Activated B cell treated with CpG ODN at 0.5 μM for 24 hours (primary cell): ENCODE measurements at regions of chr15 and their contacts with region 1.

Region 1: DNA sequence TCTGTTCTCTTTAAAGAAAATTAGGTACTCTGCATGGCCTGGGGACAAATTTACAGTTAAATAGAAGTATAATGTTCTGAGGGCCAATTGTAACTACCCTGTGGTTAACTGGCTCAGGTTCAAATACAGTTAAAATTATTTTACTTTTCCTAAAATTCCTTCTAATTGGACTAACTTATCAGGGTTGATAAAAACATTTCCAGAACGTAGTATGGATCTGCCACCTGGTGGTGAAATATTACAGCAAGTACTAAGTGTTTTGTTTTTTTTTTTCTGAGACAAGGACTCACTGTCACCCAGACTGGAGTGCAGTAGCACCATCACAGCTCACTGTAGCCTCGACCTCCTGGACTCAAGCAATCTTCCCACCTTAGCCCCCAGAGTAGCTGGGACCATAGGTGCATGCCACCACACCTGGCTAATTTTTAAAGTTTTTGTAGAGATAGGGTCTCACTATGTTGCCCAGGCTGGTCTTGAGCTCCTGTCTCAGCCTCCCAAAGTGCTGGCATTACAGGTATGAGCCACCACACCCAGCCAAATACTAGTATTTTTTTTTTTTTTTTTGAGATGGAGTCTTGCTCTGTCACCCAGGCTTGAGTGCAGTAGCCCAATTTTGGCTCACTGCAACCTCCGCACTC is 29.2 kb downstream of the NEO1 start:
- DNase-seq: no peak
- ATAC-seq: no peak
- H3K4me3 Mint-ChIP-seq: no peak overlapping the region
- H3K27ac Mint-ChIP-seq: no peak overlapping the region
- H3K4me1 Mint-ChIP-seq: no peaks in the 10 kb centered on the region
- H3K27me3 Mint-ChIP-seq: peaks cover 5% of the 10 kb centered on the region
- CTCF ChIP-seq: no peak

Region 2: DNA sequence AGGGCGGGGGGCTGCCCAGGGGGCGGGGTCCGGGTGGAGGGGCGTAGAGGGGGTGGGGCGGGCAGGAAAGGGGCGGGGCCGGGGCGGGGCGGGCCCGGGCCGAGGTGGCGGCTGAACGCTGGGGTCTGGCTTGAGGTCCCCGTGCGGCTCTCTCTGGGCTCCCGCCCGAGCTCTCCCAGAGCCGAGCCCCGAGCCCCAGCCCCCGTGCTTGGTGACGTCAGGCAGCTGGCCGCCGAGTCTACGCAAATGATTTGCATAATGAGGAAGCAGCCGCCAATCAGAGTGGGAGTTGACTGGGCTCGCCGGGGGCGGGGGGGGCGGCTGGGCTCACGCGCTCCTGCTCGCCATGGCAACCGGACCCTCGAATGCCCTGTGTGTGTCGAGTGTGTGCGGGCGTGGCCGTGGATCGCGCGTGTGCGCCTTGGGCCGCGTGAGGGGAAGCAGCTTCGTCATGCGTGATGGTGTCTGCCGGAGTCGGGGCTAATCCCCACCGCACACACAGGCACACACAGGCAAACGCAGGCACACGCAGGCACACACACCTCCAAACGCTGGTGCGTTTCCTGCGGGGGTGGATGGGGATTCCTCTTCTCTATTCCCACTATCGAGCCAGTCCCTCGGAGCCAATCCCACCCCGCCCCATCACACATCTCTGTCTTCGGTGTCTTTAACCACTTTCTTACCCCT is 761.3 kb before region 1 on chr15 and contains the start of gene CELF6:
- CTCF ChIA-PET with region 1: no interaction called
- POLR2A ChIA-PET with region 1: no interaction called
- intact Hi-C with region 1: loop called (anchors 10 kb)
- DNase-seq: peak; percentile 77
- ATAC-seq: peak; percentile 81
- H3K4me3 Mint-ChIP-seq: peak within 1 kb of the TSS; percentile 86
- H3K27ac Mint-ChIP-seq: peak within 1 kb of the TSS; percentile 47
- H3K4me1 Mint-ChIP-seq: peaks cover 18% of the 10 kb centered on the region
- H3K27me3 Mint-ChIP-seq: no peaks in the 10 kb centered on the region
- CTCF ChIP-seq: no peak
- total RNA-seq, gene CELF6: 2.0 and 2.2 TPM in 2 replicates

Region 3: GRCh38 chr15:72722071-72722696 is 359.3 kb before region 1 on chr15:
- CTCF ChIA-PET with region 1: interaction called, 21 read pairs
- POLR2A ChIA-PET with region 1: interaction called, 3 read pairs
- intact Hi-C with region 1: loop called (anchors 1 kb)
- DNase-seq: peak; percentile 32
- ATAC-seq: no peak
- H3K4me3 Mint-ChIP-seq: no peak overlapping the region
- H3K27ac Mint-ChIP-seq: no peak overlapping the region
- H3K4me1 Mint-ChIP-seq: no peaks in the 10 kb centered on the region
- H3K27me3 Mint-ChIP-seq: no peaks in the 10 kb centered on the region
- CTCF ChIP-seq: no peak

Region 4: GRCh38 chr15:72740219-72740618 is 341.2 kb before region 1 on chr15:
- CTCF ChIA-PET with region 1: no interaction called
- POLR2A ChIA-PET with region 1: no interaction called
- intact Hi-C with region 1: no loop called
- DNase-seq: no peak
- ATAC-seq: peak; percentile 25
- H3K4me3 Mint-ChIP-seq: peak overlapping the region; percentile 32
- H3K27ac Mint-ChIP-seq: peak overlapping the region; percentile 54
- H3K4me1 Mint-ChIP-seq: peaks cover 23% of the 10 kb centered on the region
- H3K27me3 Mint-ChIP-seq: no peaks in the 10 kb centered on the region
- CTCF ChIP-seq: no peak

Region 5: DNA sequence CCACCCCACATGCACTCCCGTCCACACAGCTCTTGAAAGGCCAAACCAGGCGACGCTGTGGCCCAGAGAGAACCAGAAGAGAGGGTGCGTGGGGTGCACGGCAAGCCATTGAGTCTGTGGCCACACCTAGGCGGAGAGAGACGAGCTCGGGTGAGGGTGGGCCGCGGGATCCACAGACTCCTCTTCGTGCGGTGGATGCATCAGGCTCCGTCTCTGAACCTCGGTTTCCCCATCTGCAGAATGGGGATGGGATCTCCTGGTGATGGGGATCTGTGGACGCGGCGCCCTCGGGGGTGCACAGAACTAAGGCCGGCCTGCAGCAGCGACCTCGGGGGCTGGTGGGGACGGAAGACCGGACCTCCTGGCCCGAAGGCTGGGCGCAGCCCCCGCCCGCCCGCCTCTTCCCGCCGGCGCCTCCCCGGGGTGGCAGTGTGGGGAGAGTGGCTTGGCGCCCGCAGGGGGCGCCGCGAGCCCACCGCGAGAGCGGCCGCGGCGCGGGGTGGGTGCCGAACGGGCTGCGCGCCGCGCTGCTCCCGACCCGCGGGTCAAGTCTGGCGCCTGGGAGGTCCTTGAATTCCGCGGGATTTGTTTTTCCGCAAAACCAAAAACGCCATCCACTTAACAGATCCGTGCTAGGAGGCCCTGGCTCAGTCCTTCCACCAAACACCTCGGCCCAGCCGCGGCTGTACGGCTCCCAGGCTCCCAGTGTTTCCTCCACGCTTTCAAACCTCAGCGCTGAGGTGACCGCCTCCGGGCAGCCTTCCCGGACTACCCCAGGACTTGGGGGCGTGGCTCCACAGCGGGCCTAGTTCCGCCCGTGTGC is 284.7 kb before region 1 on chr15:
- CTCF ChIA-PET with region 1: interaction called, 3 read pairs
- POLR2A ChIA-PET with region 1: no interaction called
- intact Hi-C with region 1: loop called (anchors 1 kb)
- DNase-seq: peak; percentile 48
- ATAC-seq: peak; percentile 86
- H3K4me3 Mint-ChIP-seq: peak overlapping the region; percentile 81
- H3K27ac Mint-ChIP-seq: no peak overlapping the region
- H3K4me1 Mint-ChIP-seq: peaks cover 15% of the 10 kb centered on the region
- H3K27me3 Mint-ChIP-seq: peaks cover 46% of the 10 kb centered on the region
- CTCF ChIP-seq: no peak

Region 6: DNA sequence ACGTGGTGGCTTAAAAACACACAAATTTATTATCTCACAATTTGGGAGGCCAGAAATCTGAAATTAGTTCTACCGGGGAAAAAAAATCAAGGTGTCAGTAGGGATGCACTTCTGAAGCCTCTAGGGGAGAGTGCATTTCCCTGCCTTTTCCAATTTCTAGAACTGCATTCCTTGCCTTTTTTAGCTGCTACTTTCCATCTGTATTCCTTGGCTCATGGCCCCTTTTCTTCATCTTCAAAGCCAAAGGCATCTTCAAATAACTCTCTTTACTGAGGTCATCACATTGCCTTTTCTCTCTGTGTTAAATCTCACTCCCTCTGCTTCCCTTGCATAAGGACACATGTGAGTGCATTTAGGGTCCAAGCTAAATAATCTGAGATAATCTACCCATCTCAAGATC is 98.7 kb before region 1 on chr15:
- CTCF ChIA-PET with region 1: no interaction called
- POLR2A ChIA-PET with region 1: no interaction called
- intact Hi-C with region 1: no loop called
- DNase-seq: no peak
- ATAC-seq: no peak
- H3K4me3 Mint-ChIP-seq: no peak overlapping the region
- H3K27ac Mint-ChIP-seq: no peak overlapping the region
- H3K4me1 Mint-ChIP-seq: no peaks in the 10 kb centered on the region
- H3K27me3 Mint-ChIP-seq: peaks cover 19% of the 10 kb centered on the region
- CTCF ChIP-seq: no peak

Region 7: DNA sequence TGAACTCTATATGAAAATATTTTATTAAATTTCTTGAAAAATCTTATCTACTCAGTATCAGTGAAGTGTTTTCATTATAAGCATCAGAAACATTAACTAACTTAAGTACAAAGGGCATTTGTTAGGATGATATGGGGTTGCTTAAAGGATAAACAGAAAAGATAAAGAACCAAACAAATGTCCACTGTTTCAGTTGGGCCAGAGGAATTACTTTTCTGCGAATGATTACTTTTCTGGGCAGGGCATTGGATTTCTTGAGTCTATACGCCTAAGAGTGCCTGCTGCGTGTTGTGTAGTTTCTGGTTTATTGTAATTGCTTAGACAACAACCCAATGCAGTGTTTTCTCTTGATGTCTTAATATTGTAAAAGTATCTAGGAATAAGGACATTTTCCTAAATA is 23.6 kb after region 1 on chr15:
- CTCF ChIA-PET with region 1: no interaction called
- POLR2A ChIA-PET with region 1: no interaction called
- intact Hi-C with region 1: no loop called
- DNase-seq: no peak
- ATAC-seq: no peak
- H3K4me3 Mint-ChIP-seq: no peak overlapping the region
- H3K27ac Mint-ChIP-seq: no peak overlapping the region
- H3K4me1 Mint-ChIP-seq: no peaks in the 10 kb centered on the region
- H3K27me3 Mint-ChIP-seq: peaks cover 6% of the 10 kb centered on the region
- CTCF ChIP-seq: no peak